ENCODE measurements at regions of chr17 and their contacts with region 1.

Region 1: DNA sequence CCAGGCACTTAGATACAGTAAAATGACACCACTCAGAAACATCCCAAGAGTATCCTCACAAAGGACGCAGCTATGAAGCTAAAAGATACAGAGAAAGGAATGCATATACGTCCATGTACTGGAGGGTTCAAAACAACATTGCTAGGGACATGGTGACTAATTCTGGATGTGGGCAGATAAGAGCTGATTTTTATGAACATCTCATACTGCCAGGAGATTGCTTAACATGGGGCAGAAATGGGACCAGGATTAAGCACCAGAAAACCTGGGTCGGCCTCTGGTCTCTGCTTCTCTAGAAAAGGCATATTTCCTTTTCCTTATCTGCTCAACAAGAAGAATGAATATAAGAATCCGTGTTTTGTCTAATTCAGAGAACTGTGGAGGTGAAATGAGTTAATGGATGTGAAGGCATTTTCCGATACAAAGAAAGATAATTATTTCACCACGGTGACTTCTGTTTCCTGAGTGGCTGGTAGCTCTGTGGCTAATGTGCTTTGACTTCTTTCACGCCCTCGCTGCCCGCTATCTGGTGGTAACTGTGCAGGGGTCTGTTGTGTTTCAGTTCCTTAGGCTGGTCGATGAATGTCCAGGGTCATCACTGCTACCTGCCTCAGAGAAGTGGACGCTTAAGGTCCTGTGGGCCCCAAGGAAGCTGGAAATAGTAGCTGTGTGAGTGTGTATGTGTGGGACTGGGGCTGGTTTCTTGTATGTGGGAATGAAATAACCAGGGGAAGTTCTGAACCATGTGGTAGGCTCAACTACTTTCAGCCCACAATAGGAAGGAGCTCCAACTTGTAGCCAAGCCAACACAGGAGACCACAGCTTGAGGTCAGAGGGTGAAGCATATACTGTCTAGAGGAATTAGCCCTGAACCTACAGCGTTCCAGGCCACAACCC is 15.7 kb upstream of the CCL5 start:
- DNase-seq: peak in 20 of 35 experiments; percentile 17 to 75 (median 42)
- ATAC-seq: peak in 3 of 4 experiments; percentile 21 to 74 (median 27)
- H3K4me3 ChIP-seq: no peak overlapping the region
- H3K4me3 Mint-ChIP-seq: peak overlapping the region in 2 of 3 donors; percentile 40 to 48
- H3K27ac ChIP-seq: peak overlapping the region; percentile 69
- H3K27ac Mint-ChIP-seq: peak overlapping the region; percentile 92
- H3K4me1 ChIP-seq: peaks cover 9 to 95% of the 10 kb centered on the region in 2 experiments
- H3K4me1 Mint-ChIP-seq: peaks cover 47 to 76% (median 74%) of the 10 kb centered on the region in 3 donors
- H3K27me3 ChIP-seq: no peaks in the 10 kb centered on the region
- H3K27me3 Mint-ChIP-seq: peaks cover 0 to 2% of the 10 kb centered on the region in 2 donors

Region 2: GRCh38 chr17:35660902-35661301 is 235.0 kb before region 1 on chr17:
- CTCF ChIA-PET with region 1: no interaction called
- POLR2A ChIA-PET with region 1: interaction called in 1 of 2 experiments, 10 read pairs
- DNase-seq: no peak
- ATAC-seq: no peak
- H3K4me3 ChIP-seq: no peak overlapping the region
- H3K4me3 Mint-ChIP-seq: no peak overlapping the region
- H3K27ac ChIP-seq: no peak overlapping the region
- H3K27ac Mint-ChIP-seq: no peak overlapping the region
- H3K4me1 ChIP-seq: no peaks in the 10 kb centered on the region
- H3K4me1 Mint-ChIP-seq: no peaks in the 10 kb centered on the region
- H3K27me3 ChIP-seq: no peaks in the 10 kb centered on the region
- H3K27me3 Mint-ChIP-seq: no peaks in the 10 kb centered on the region

Region 3: GRCh38 chr17:35816723-35817122 is 79.2 kb before region 1 on chr17:
- CTCF ChIA-PET with region 1: no interaction called
- POLR2A ChIA-PET with region 1: interaction called in 1 of 2 experiments, 11 read pairs
- DNase-seq: no peak
- ATAC-seq: no peak
- H3K4me3 ChIP-seq: no peak overlapping the region
- H3K4me3 Mint-ChIP-seq: no peak overlapping the region
- H3K27ac ChIP-seq: no peak overlapping the region
- H3K27ac Mint-ChIP-seq: no peak overlapping the region
- H3K4me1 ChIP-seq: peaks cover 6 to 15% of the 10 kb centered on the region in 2 experiments
- H3K4me1 Mint-ChIP-seq: peaks cover 64 to 73% (median 73%) of the 10 kb centered on the region in 3 donors
- H3K27me3 ChIP-seq: no peaks in the 10 kb centered on the region
- H3K27me3 Mint-ChIP-seq: no peaks in the 10 kb centered on the region

Region 4: GRCh38 chr17:35879773-35880654 is 15.9 kb before region 1 on chr17 and contains the start of gene CCL5:
- CTCF ChIA-PET with region 1: interaction called, 3 to 5 read pairs
- POLR2A ChIA-PET with region 1: interaction called in 1 of 2 experiments, 13 read pairs
- DNase-seq: peak in 31 of 35 experiments; percentile 21 to 82 (median 43)
- ATAC-seq: peak; percentile 70 to 85 (median 74)
- H3K4me3 ChIP-seq: peak within 1 kb of the TSS in 1 of 2 donors; percentile 62
- H3K4me3 Mint-ChIP-seq: peak within 1 kb of the TSS; percentile 59 to 87 (median 85)
- H3K27ac ChIP-seq: peak within 1 kb of the TSS; percentile 78
- H3K27ac Mint-ChIP-seq: peak within 1 kb of the TSS; percentile 85 to 89
- H3K4me1 ChIP-seq: peaks cover 15 to 21% of the 10 kb centered on the region in 2 experiments
- H3K4me1 Mint-ChIP-seq: peaks cover 31 to 41% (median 37%) of the 10 kb centered on the region in 3 donors
- H3K27me3 ChIP-seq: no peaks in the 10 kb centered on the region
- H3K27me3 Mint-ChIP-seq: no peaks in the 10 kb centered on the region
- total RNA-seq, gene CCL5: 124 to 557 (median 298) TPM

Region 5: GRCh38 chr17:37438141-37438540 is 1542.3 kb after region 1 on chr17:
- CTCF ChIA-PET with region 1: no interaction called
- POLR2A ChIA-PET with region 1: no interaction called
- DNase-seq: no peak
- ATAC-seq: no peak
- H3K4me3 ChIP-seq: no peak overlapping the region
- H3K4me3 Mint-ChIP-seq: no peak overlapping the region
- H3K27ac ChIP-seq: no peak overlapping the region
- H3K27ac Mint-ChIP-seq: no peak overlapping the region
- H3K4me1 ChIP-seq: no peaks in the 10 kb centered on the region
- H3K4me1 Mint-ChIP-seq: peaks cover 0 to 3% (median 0%) of the 10 kb centered on the region in 3 donors
- H3K27me3 ChIP-seq: no peaks in the 10 kb centered on the region
- H3K27me3 Mint-ChIP-seq: no peaks in the 10 kb centered on the region